ENCODE measurements at regions of chr6 and their contacts with region 1.

Region 1: GRCh38 chr6:157667211-157668008 is 155.6 kb upstream of the SNX9 start:
- DNase-seq: peak; percentile 72
- H3K4me3 ChIP-seq: no peak overlapping the region
- H3K27ac ChIP-seq: no peak overlapping the region
- H3K4me1 ChIP-seq: peaks cover 0 to 23% (median 19%) of the 10 kb centered on the region in 4 donors
- H3K27me3 ChIP-seq: no peaks in the 10 kb centered on the region
- CTCF ChIP-seq: peak; percentile 67 to 86 (median 82)
- EP300 ChIP-seq: no peak
- POLR2A ChIP-seq: no peak

Region 2: DNA sequence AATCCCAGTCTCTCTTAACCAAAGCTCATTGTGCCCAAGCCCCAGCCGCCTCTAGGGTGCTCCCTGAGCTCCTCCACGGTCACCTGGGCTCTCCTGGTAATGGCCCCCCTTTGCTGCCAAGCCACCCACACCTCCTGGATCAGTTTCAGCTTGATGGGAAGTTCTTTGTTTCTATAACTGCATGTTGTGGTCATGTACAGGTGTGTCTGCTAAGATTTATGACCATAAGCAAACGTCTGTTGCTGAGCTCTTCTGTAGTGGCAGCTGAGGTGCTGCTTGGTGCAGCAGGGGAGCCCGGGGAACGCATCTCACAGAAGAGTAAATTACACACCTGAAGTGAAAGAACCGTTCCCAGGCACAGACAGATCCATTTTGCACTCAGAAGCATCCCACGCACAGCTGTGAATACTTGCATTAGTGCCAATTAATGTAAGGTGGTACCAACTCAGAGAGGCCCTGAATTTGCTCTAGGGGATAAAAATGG is 1084.9 kb before region 1 on chr6:
- intact Hi-C with region 1: no loop called
- DNase-seq: no peak
- H3K4me3 ChIP-seq: no peak overlapping the region
- H3K27ac ChIP-seq: no peak overlapping the region
- H3K4me1 ChIP-seq: no peaks in the 10 kb centered on the region
- H3K27me3 ChIP-seq: no peaks in the 10 kb centered on the region
- CTCF ChIP-seq: no peak
- EP300 ChIP-seq: no peak
- POLR2A ChIP-seq: no peak

Region 3: DNA sequence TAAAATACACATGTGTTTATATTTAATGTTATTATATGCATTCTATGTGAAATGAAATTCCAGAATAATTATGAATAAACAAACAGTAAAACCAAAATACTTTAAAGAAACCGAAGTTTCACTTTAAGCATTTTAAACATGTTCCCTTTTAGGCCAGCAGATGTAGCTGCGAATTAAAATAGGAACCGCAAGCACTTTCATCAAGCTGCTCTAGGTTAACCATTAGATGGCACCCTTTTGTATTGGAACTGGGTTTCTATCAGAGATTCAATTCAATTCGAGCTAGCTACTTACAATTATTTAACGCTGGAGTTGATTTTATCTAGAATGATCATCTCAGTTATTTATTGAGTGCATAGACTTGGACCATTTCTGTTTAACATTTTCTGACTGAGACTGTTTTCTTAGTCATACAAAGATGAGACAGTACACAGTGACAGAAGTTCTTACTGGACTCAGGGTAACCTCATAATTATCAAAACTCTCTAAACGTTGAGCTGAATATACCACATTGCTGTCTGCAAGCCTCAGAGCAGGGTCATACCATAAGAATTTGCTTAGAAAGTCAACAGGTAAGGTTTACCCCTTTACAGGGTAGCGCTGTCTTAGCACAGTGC is 352.6 kb before region 1 on chr6:
- intact Hi-C with region 1: loop called (anchors 2 kb)
- DNase-seq: no peak
- H3K4me3 ChIP-seq: no peak overlapping the region
- H3K27ac ChIP-seq: no peak overlapping the region
- H3K4me1 ChIP-seq: peaks cover 0 to 16% (median 10%) of the 10 kb centered on the region in 4 donors
- H3K27me3 ChIP-seq: no peaks in the 10 kb centered on the region
- CTCF ChIP-seq: peak; percentile 44 to 75 (median 57)
- EP300 ChIP-seq: no peak
- POLR2A ChIP-seq: no peak

Region 4: DNA sequence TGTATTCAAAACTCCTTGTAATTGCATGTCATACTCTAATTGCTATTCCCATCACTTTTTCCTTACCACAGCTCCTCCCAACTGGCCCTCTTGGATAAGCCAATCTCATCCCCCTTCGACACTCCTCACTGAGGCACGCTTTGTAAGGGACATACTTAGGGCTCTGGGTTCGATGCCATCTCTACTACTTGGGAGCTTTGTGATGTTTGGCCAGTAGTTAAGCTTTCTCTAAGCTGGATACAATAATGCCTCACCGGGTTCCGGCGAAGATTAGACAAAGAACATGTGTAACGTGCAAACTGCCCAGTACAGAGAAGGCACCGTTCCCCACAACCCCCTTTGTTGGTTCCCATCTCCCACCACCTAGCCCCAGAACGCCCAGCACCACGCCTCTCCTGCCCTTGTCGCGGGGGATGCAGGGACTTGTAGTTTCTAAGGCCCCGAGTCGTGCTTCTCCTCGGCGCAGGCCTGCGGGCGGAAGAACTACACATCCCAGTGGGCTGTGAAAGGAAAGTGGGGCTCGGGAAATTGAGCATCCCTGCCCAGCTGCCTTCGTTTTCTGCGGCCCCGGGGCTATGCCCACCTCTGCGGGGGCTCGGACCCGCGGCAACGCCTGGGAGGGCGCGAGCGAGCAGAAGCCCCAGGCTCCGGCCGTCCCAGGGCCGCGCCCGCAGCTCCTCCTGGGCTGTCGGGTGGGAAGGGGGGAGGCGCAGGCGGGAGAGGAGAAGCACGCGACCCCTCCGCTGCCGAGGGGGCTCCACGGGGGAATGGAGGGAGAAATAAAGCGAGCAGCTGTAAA is 287.6 kb before region 1 on chr6:
- intact Hi-C with region 1: loop called (anchors 2 kb)
- DNase-seq: peak; percentile 94
- H3K4me3 ChIP-seq: peak overlapping the region; percentile 91 to 98 (median 92)
- H3K27ac ChIP-seq: peak overlapping the region; percentile 93 to 97 (median 95)
- H3K4me1 ChIP-seq: peaks cover 0 to 22% (median 12%) of the 10 kb centered on the region in 4 donors
- H3K27me3 ChIP-seq: no peaks in the 10 kb centered on the region
- CTCF ChIP-seq: no peak
- EP300 ChIP-seq: no peak
- POLR2A ChIP-seq: no peak

Region 5: DNA sequence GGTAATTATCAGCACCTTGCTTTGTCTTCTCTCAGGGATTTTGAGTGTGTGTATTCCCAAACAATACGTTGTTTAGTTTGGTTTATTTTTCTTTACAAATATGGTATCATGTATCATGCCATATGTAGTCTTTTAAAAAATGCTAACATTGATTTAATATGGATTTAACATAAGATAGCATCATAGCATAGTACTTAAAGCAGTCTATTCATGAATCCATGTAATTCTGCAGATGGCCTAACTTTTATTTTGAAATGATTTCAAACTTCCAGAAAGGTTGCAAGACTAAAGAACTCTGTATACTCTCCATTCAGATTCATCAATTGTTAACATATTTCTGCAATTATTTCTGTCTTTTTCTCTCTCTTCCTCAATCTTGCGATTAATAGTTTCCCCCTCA is 278.5 kb before region 1 on chr6:
- intact Hi-C with region 1: loop called (anchors 1 kb)
- DNase-seq: no peak
- H3K4me3 ChIP-seq: no peak overlapping the region
- H3K27ac ChIP-seq: no peak overlapping the region
- H3K4me1 ChIP-seq: no peaks in the 10 kb centered on the region
- H3K27me3 ChIP-seq: no peaks in the 10 kb centered on the region
- CTCF ChIP-seq: no peak
- EP300 ChIP-seq: no peak
- POLR2A ChIP-seq: no peak

Measured in sigmoid colon (tissue), 7 donors.